CD4-positive, alpha-beta T cell (primary cell): ENCODE measurements at regions of chr1 and their contacts with region 1.

Region 1: DNA sequence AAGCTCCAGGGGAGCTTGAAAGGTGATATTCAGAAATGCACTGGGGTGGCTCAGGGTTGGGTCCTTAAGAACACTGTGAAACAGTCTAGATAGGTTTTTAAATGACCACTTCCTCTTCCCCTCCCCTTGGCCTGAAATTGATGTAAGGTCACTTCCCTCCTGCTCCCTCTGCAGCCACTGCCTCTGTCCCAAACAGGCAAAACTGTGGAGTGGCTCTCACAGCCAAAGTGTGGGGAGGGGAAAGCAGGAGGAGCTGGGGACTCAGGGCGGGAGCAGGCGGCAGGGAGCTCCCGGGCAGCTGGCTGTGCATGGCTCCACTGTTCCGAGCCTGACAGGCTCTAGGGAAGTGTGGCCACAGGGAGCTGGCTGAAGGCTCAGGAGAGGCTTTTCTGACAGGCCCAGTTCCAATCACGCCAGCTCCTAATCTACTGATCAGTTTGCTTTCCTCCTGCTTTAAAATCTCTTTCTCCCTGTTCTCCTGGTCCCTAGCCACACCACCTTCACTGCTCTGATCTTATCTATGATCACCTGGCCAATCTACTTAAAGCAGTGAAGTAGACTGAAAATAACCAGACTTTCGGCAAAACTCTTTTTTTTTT is 5.1 kb upstream of the CSRP1 start:
- DNase-seq: peak in 1 of 14 experiments; percentile 21
- ATAC-seq: no peak
- H3K4me3 ChIP-seq: no peak overlapping the region
- H3K4me3 Mint-ChIP-seq: no peak overlapping the region
- H3K27ac ChIP-seq: no peak overlapping the region
- H3K27ac Mint-ChIP-seq: no peak overlapping the region
- H3K4me1 ChIP-seq: peaks cover 15% of the 10 kb centered on the region
- H3K4me1 Mint-ChIP-seq: peaks cover 29% of the 10 kb centered on the region
- H3K27me3 ChIP-seq: no peaks in the 10 kb centered on the region
- H3K27me3 Mint-ChIP-seq: no peaks in the 10 kb centered on the region
- CTCF ChIP-seq: no peak

Region 2: DNA sequence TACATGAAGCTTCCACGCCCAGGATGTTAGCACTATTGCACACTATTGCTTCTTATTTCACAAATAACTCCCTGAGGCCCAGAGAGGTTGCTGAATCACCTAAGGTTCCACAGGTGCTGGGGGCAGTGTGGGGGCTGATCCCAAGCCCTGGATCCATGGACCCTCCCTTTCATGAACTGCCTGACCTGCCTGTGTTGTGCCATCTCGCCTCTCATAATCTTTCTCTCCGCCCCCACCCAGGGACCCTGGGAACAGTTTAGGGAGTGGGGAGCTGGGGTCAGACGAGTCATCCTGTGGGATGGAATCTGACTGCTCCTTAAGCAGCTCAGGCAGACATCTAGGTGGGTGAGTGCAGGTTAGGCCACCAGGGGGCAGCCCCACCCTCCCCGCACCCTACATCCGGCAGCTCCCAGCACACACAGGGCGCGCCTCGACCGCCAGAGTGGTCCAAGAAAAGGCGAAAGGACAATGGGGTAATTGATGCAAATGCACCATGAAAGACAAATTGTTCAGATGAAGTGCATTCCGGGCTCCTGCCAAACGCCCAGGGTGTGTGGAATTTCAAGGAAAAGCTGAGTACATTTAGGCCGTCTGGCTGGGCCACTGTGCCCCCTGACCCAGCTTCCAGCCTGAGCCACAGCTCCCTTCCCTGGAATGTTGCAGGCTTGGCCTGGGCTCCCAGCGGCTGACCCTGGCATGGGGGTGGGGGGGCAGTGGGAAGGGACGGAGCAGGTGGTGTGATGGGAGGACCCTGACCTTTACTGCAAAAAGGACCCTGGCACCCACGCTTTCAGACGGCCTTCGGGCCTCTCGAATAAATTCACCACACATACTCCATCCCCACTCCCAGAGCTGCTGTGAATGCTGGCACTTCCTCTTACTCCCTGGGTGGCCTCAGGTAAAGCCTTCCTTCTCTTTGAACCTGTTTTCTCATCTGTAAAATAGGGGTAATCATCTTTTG is 63.8 kb before region 1 on chr1:
- CTCF ChIA-PET with region 1: interaction called, 27 read pairs
- POLR2A ChIA-PET with region 1: interaction called, 4 read pairs
- intact Hi-C with region 1: loop called (anchors 1 kb)
- DNase-seq: peak; percentile 36 to 77 (median 49)
- ATAC-seq: peak; percentile 78
- H3K4me3 ChIP-seq: no peak overlapping the region
- H3K4me3 Mint-ChIP-seq: no peak overlapping the region
- H3K27ac ChIP-seq: no peak overlapping the region
- H3K27ac Mint-ChIP-seq: no peak overlapping the region
- H3K4me1 ChIP-seq: peaks cover 9% of the 10 kb centered on the region
- H3K4me1 Mint-ChIP-seq: peaks cover 4% of the 10 kb centered on the region
- H3K27me3 ChIP-seq: peaks cover 0 to 2% of the 10 kb centered on the region in 2 experiments
- H3K27me3 Mint-ChIP-seq: peaks cover 10% of the 10 kb centered on the region
- CTCF ChIP-seq: peak; percentile 80

Region 3: DNA sequence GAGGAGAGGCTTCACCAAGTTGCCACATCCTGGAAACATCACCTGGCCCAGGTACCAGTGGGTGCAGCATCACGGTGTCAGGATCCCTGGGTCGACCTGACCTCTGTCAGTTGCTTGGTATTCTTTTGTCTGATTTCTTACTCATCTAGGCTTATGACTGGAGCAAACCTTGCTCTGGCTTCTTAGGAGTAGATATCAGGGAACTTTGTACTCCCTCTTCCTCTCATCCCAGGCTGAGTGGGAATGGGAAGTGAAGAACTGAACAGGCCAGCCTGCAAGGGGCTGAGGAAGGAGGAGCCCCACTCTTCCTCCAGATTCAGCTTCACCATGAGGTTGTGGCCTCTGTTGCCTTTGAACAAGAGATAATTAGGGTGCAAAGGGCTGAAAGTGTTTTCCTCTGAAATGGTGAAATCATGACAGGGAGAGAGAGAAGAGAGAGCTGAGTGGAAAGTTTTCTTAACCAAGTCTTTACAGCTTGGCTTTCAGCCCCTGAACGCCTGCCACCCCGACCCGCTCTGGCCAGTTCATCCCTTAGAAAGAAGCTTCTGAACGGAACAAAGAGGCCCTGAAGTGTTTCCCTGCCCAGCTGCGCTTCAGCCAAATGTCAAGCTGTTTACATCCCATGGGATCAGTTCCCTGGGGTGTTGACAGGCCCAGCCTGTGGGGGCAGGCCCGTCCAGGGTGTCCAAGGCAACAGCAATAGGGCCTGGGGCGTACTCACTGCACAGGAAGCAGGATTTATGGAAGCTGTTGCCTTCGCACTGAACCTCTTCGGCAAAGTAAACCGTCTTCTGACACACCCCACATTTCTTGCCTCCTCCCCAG is 16.4 kb before region 1 on chr1:
- CTCF ChIA-PET with region 1: interaction called, 29 read pairs
- POLR2A ChIA-PET with region 1: no interaction called
- intact Hi-C with region 1: no loop called
- DNase-seq: no peak
- ATAC-seq: no peak
- H3K4me3 ChIP-seq: no peak overlapping the region
- H3K4me3 Mint-ChIP-seq: no peak overlapping the region
- H3K27ac ChIP-seq: no peak overlapping the region
- H3K27ac Mint-ChIP-seq: no peak overlapping the region
- H3K4me1 ChIP-seq: no peaks in the 10 kb centered on the region
- H3K4me1 Mint-ChIP-seq: no peaks in the 10 kb centered on the region
- H3K27me3 ChIP-seq: no peaks in the 10 kb centered on the region
- H3K27me3 Mint-ChIP-seq: no peaks in the 10 kb centered on the region
- CTCF ChIP-seq: no peak

Region 4: DNA sequence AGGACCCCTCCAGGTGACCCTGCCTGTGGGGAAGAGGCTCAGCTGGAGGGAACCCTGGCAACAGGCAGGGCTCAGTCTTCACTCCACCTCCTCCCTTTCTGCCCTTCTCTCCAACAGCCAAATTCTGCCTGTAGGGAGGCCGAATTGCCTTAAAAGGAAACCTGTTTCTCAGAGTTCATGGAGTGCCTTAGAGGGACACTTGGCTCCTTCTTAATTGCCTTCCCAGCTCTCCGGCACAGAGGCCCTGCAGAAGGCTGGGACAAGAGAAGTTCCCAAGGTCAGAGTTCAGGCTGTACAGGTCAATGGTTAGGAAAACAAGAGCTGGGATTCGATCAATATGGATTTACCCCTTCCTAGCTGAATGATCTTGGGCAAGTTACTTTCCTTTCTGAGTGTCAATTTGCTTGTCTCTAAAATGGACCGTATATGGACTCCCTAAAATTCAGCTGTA is 11.3 kb before region 1 on chr1:
- CTCF ChIA-PET with region 1: interaction called, 29 read pairs
- POLR2A ChIA-PET with region 1: interaction called, 4 read pairs
- intact Hi-C with region 1: no loop called
- DNase-seq: no peak
- ATAC-seq: no peak
- H3K4me3 ChIP-seq: no peak overlapping the region
- H3K4me3 Mint-ChIP-seq: no peak overlapping the region
- H3K27ac ChIP-seq: no peak overlapping the region
- H3K27ac Mint-ChIP-seq: no peak overlapping the region
- H3K4me1 ChIP-seq: peaks cover 19% of the 10 kb centered on the region
- H3K4me1 Mint-ChIP-seq: peaks cover 15% of the 10 kb centered on the region
- H3K27me3 ChIP-seq: no peaks in the 10 kb centered on the region
- H3K27me3 Mint-ChIP-seq: no peaks in the 10 kb centered on the region
- CTCF ChIP-seq: no peak

Region 5: DNA sequence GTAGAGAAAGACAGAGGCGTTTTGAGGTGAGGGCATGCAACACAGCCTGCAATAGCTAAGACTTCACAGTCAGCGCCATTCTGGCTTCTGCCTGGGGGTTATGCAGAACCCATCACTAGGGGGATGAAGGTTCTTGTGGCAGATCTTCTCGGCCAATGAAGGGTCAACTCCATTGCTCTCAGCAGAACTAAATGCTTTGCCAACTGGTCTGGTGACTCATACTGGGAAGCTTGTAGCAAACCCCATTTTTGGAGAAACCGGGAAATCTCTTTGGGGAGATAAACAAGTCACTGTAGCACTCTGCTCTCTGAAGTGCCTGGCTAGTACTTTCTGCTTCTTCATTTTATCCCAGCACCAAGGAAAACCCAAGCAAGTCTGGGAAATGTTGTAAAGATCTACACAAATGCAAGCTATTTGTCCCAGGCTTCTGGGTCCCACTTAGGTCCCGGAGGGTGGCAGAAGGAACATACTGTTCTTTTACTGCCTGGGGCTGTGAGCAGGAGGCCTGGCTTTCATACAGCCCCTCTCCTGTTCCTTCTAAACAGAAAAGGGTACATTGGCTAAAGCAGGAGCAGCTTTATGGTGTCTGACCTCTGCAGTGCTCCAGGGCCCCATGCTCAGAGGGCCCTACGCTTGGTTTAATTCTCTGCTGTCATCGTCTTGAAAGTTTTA is 405.5 kb after region 1 on chr1:
- CTCF ChIA-PET with region 1: no interaction called
- POLR2A ChIA-PET with region 1: no interaction called
- intact Hi-C with region 1: no loop called
- DNase-seq: no peak
- ATAC-seq: no peak
- H3K4me3 ChIP-seq: no peak overlapping the region
- H3K4me3 Mint-ChIP-seq: no peak overlapping the region
- H3K27ac ChIP-seq: no peak overlapping the region
- H3K27ac Mint-ChIP-seq: no peak overlapping the region
- H3K4me1 ChIP-seq: no peaks in the 10 kb centered on the region
- H3K4me1 Mint-ChIP-seq: no peaks in the 10 kb centered on the region
- H3K27me3 ChIP-seq: peaks cover 0 to 2% of the 10 kb centered on the region in 2 experiments
- H3K27me3 Mint-ChIP-seq: peaks cover 27% of the 10 kb centered on the region
- CTCF ChIP-seq: no peak

Region 6: DNA sequence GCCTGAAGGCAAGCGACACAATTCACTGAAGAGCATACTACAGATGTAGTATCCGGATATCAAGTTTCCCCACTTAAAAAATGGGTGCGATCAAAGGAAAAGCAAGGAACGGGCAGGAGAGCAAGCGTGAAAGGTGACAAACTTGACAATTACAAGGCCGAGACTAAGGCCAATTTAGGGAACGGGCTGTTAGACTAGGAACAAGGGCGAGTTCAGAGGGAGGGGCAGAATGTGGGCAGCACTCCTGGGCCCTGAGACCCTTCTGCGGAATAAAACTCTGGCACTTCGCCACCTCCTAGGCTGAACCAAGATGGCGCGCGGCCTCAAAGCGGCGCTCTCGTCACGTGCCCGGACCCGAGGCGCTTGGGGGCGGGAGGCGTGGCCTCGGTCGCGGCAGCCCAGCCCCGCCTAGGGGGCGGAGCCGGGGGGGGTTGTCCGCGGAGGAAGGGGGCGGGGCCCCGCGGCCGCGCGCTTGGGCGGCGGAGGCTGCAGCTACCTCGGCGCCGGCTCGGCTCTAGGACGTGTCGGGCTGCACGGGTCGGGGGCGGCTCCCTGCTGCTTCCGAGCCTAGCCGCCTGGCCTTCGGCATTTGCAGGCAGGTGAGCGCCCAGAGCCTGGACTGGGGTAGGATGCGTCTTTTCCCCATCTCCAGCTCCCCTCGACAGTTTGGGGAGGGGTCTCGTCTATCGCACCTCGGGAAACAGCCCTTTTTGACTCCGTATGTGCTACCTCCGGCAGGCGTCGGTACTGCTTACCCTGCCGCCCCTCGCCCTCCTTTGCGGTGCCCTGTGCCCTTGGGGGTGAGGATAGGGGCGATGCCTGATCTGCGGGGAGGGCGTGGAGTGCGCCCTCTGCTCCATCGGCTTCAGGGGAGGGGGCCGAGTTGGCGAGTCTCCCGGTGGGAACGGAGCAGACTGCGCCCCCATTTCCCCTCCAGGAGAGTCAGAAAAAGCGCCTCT is 1514.3 kb after region 1 on chr1 and contains the start of gene PPFIA4:
- CTCF ChIA-PET with region 1: no interaction called
- POLR2A ChIA-PET with region 1: no interaction called
- intact Hi-C with region 1: no loop called
- DNase-seq: peak; percentile 74 to 95 (median 86)
- ATAC-seq: peak; percentile 93
- H3K4me3 ChIP-seq: peak within 1 kb of the TSS; percentile 89
- H3K4me3 Mint-ChIP-seq: peak within 1 kb of the TSS; percentile 85
- H3K27ac ChIP-seq: peak within 1 kb of the TSS; percentile 26 to 63
- H3K27ac Mint-ChIP-seq: peak within 1 kb of the TSS; percentile 79
- H3K4me1 ChIP-seq: peaks cover 17% of the 10 kb centered on the region
- H3K4me1 Mint-ChIP-seq: peaks cover 14% of the 10 kb centered on the region
- H3K27me3 ChIP-seq: no peaks in the 10 kb centered on the region
- H3K27me3 Mint-ChIP-seq: no peaks in the 10 kb centered on the region
- CTCF ChIP-seq: no peak
- total RNA-seq, gene PPFIA4: 0.93 to 0.98 TPM